Left colon (tissue), 2 donors: ENCODE measurements at regions of chr10 and their contacts with region 1.

Region 1: DNA sequence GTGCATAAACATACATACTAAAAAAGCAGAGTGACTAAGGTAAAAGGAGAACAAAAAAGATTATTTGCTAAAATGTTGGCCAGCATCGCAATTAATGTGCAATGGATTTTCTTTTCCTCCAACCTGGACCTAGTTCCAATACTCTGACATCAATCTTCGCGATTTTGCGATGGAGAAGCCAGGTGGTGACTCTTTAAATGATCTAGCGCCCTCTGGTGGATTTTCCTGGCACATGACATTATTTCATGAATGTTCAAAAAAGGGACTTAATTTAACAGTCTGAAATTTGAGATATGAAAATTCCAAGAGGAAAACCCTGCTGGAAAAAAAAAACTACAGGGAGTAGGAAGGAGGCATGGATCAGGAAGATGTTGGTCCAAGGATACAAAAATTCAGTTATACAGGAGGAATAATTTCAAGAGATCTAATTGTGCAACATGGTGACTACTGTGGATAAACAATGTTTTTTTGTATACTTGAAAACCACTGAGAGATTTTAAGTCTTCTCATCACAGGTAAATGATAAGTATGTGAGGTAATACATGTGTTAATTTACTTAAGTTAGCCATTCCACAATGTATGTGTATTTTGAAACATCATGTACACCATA is 4.3 kb upstream of the KCNMA1 start:
- DNase-seq: peak; percentile 50 to 74
- ATAC-seq: peak; percentile 56

Region 2: DNA sequence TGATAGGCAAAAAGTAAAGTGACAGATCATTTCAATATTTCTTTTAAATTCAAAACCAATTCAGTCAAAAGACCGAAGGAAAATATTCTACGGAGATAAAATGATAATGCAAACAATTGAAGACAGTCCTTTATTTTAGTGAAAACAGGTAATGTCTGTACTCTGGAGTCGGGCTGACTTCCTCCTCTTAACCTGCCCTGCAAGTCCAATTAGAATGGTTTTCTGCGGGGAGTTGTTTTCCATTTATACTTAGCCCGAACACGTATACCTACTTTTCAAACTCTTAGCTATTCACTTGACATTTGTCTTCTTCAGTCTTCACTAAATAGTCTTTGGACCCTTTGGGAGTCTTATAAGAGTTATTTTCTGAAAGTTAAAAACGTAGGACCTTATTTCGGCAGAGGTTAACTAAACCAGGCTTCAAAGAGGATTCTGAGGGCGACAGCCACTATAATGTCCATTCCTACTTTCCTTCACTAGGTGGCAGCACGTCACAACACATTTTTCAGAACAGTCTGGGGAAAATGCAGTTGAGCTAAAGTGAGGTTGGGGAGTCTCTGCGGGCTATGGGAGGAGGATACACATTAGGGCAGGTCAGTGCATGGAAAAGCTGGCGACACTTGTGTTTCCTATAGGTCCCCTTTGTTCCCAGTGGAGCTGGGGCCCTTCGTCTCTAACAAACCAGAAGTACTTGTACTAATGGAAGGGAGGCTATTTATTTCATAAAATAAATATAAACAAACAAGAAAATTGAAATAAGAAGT is 476.3 kb before region 1 on chr10:
- intact Hi-C with region 1: loop called (anchors 5 kb)
- DNase-seq: peak in 1 of 2 donors; percentile 40
- ATAC-seq: peak; percentile 49

Region 3: DNA sequence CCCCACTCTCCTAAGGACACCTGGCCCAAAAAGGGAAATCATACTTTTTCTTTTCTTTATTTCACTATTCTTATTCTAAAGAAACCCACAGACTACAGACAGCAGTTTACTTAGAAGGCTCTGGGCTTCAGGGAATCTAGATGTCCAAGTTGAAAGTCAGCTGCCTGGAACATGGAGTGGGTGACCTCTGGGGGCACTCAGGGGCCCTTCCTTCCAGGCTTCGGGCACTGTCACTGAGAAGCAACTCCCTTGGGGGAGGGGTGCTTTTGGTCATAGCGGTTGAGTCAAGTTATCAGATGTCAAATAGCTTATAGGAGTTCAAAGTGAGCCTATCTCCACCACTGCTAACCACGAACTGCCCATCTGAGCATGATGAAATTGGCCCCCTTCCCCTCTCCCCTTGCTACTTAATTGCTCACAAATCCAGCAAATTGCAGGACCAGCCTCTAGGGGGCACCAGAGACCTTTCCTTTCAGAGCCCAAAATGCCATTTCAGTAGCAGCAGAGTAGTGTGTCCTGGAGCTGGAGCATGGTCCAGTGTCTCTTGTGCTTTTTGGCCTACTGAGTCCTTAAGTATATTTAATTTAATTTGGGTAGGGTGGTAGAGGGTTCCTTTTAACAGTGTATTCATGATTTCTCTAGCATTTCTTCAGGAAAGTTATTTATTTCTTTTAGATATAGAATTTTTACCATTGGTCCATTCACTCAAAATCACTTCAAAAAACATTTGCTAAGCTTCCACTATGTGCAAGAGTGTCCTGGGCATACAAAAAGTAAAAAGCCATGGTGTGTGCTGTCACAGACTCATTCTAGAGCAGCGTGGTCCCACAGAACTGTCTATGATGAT is 468.1 kb before region 1 on chr10:
- intact Hi-C with region 1: loop called (anchors 5 kb)
- DNase-seq: peak in 1 of 2 donors; percentile 75
- ATAC-seq: peak; percentile 73

Region 4: DNA sequence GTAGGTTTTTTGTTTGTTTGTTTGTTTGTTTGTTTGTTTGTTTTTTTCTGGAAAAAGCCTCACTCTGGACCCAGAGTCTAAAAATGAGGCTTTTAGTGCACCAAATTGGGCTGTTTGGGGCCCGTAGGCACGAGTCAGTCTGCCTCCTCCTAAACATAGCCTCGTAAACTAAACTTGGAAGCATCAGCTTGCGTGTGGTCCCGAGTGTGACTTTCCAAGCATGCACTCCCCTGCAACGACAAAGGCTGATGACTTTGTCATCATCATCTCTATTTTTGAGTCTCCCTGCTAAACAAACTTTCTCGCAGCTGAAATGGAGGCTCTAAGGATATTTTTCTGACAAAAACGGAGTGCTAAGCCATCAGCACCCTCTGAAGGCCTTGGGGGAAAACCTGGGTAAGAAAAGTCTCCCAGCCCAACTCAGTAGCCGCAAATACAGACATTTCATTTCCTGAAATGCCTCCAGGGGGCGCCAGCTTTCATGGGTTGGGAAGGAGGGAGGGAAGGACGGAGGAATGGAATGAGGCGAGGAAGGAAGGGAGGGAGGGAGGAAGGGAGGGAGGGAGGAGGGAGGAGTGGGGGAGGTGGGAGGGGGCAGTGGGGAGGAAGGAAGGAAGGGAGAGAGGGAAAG is 250.2 kb before region 1 on chr10:
- intact Hi-C with region 1: loop called (anchors 2 to 10 kb)
- DNase-seq: peak; percentile 67 to 74
- ATAC-seq: peak; percentile 82